ENCODE measurements at regions of chr1 and their contacts with region 1.

Region 1: GRCh38 chr1:147815498-147815897 is 55.1 kb upstream of the GJA5 start:
- DNase-seq: no peak
- ATAC-seq: no peak
- H3K4me3 ChIP-seq: no peak overlapping the region
- H3K27ac ChIP-seq: no peak overlapping the region
- H3K4me1 ChIP-seq: peaks cover 0 to 15% (median 2%) of the 10 kb centered on the region in 9 donors
- H3K27me3 ChIP-seq: no peaks in the 10 kb centered on the region
- CTCF ChIP-seq: peak in 3 of 9 donors; percentile 9 to 16 (median 10)

Region 2: GRCh38 chr1:147723691-147724323 is 91.7 kb before region 1 on chr1:
- intact Hi-C with region 1: loop called in 1 of 10 experiments (anchors 5 kb)
- DNase-seq: peak; percentile 47 to 48
- ATAC-seq: peak; percentile 89 to 96 (median 94)
- H3K4me3 ChIP-seq: no peak overlapping the region
- H3K27ac ChIP-seq: no peak overlapping the region
- H3K4me1 ChIP-seq: peaks cover 0 to 5% (median 0%) of the 10 kb centered on the region in 9 donors
- H3K27me3 ChIP-seq: no peaks in the 10 kb centered on the region
- CTCF ChIP-seq: peak; percentile 48 to 85 (median 68)

Region 3: DNA sequence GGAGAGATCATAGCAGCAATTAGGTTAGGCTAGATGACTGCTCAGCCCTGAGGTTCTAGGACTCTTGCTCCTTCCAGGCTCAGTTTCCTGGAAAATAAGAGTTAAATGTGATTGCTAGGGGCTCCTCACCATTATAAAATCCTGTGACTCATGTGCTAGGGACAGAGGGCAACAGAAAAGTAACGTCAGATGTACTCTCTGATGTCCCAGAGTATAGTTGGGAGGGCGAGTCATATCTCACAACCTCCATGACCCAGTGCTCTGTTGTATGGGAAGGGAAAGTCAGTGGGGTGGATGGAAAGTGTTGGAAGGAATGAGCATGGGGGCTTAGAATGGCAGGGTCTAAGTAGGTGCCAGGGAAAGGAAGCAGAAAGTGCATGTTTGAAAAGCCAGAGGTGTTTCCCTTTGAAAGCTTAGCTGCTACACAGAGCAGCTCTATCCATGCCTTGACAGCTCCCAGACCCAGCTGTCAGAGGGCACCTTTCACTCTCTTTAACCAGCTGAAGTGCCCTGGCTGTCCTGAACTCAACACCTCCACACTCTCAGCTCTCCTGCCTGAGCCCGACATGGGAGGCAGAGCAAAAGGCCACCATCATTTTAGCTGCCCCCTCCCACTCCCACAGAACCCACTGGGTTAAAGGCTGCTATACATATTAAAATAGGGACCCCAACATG is 66.7 kb before region 1 on chr1:
- intact Hi-C with region 1: loop called in 2 of 10 experiments (anchors 5 to 10 kb)
- DNase-seq: peak in 1 of 2 donors; percentile 48
- ATAC-seq: peak; percentile 87 to 96 (median 93)
- H3K4me3 ChIP-seq: no peak overlapping the region
- H3K27ac ChIP-seq: peak overlapping the region in 5 of 10 donors; percentile 16 to 76 (median 70)
- H3K4me1 ChIP-seq: peaks cover 0 to 16% (median 11%) of the 10 kb centered on the region in 9 donors
- H3K27me3 ChIP-seq: no peaks in the 10 kb centered on the region
- CTCF ChIP-seq: no peak

Region 4: DNA sequence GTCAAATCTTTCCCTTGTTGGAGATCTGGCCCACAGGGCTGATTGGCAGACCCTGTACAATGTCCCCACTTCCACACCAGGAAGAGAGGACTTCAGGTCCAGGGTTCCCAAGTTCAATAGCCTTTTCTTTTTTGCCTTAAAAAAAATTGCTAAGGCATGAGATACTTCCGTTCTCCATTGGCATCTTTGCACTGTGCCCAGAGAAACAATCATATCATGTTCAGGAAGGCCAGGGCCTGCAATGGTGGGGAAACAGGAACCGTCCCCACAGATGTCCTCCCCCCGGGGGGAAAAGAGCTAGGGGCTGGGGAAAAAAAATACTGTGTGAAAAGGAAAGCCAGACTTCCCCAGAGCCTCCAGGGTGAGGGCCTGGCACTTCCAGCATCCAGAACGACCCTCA is 62.5 kb after region 1 on chr1:
- intact Hi-C with region 1: loop called in 1 of 10 experiments (anchors 10 kb)
- DNase-seq: no peak
- ATAC-seq: peak in 5 of 8 donors; percentile 25 to 44 (median 30)
- H3K4me3 ChIP-seq: no peak overlapping the region
- H3K27ac ChIP-seq: no peak overlapping the region
- H3K4me1 ChIP-seq: no peaks in the 10 kb centered on the region
- H3K27me3 ChIP-seq: no peaks in the 10 kb centered on the region
- CTCF ChIP-seq: no peak

Measured in heart right ventricle (tissue), 16 donors.